OCI-LY7 (cell line): ENCODE measurements at regions of chr5 and their contacts with region 1.

Region 1: GRCh38 chr5:180784497-180785097 is 18.0 kb downstream of the MGAT1 start:
- DNase-seq: peak; percentile 81
- H3K4me3 ChIP-seq: no peak overlapping the region
- H3K27ac ChIP-seq: no peak overlapping the region
- H3K4me1 ChIP-seq: no peaks in the 10 kb centered on the region
- CTCF ChIP-seq: peak; percentile 87

Region 2: GRCh38 chr5:180810210-180810958 is 25.8 kb after region 1 on chr5:
- CTCF ChIA-PET with region 1: no interaction called
- POLR2A ChIA-PET with region 1: no interaction called
- intact Hi-C with region 1: no loop called
- DNase-seq: peak; percentile 96
- H3K4me3 ChIP-seq: peak overlapping the region; percentile 84
- H3K27ac ChIP-seq: peak overlapping the region; percentile 96
- H3K4me1 ChIP-seq: peaks cover 79% of the 10 kb centered on the region
- CTCF ChIP-seq: no peak

Region 3: DNA sequence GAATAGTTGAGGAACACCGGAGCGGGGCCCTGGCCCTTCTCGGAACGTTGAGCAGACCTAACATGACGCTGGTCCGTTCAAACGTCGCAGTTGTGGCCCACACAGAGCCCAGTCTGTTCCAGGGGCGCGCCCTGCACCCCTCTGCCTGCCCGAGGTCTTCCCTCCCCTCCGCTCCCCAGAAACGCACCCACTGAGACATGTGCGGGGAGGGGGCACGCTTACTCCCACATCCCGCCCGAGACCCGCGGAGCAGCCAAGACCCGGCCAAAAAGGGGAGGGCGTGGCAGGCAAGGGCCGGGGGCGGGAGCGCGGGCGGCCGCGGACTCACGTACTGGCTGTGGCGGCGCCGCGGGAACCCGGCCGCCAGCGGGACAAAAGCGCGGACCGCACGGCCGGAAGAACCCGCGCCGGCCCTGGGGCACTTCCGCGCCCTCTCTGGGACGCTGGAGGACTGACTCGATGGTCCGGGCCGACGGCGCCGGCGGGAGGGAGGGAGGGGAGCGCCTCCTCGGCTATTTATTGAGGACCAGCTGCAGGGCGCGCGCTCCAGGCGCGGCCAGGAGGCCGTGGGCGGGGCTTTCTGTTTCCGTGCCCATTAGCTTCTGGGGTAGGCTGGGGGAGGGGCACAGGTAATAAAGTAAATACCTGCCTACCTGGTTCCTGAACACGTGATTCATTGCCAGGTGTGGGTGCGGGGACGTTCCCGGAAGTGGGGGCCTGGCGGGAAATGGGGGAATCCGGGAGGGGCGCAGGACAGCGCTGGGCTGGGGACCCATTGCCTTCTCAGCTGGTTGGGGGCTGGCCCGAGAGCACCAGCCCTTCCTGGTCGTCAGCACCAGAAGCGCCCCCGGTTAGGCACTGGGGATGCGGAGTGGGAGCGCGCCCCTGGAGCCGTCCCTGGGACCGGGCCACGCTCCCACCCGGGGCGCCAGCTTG is 76.6 kb after region 1 on chr5 and contains the start of gene ZFP62:
- CTCF ChIA-PET with region 1: interaction called, 3 read pairs
- POLR2A ChIA-PET with region 1: interaction called, 3 read pairs
- intact Hi-C with region 1: loop called (anchors 2 kb)
- DNase-seq: peak; percentile 96
- H3K4me3 ChIP-seq: peak within 1 kb of the TSS; percentile 96
- H3K27ac ChIP-seq: peak within 1 kb of the TSS; percentile 95
- H3K4me1 ChIP-seq: peaks cover 18% of the 10 kb centered on the region
- CTCF ChIP-seq: no peak
- total RNA-seq, gene ZFP62: 58.4 and 59.0 TPM in 2 replicates

Region 4: DNA sequence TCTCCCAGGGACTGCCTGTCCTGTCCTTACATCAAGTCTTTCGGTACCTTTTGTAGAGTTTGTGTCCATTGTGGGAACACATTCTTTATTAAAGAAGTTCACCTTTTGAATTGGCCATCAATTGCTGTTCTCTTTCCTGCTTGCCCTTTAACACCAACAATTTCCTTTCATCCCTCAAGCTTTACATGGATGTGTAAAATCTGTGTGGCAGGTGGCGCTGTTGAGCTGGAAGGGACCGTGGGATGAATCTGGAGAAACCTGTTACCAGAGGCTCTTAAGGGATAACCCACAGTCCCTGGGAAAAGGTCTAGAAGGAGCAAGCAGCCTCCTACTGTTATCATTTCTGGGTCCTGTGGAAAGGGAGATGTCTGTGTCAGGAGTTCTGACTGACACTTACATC is 84.4 kb after region 1 on chr5:
- CTCF ChIA-PET with region 1: interaction called, 3 read pairs
- POLR2A ChIA-PET with region 1: interaction called, 3 read pairs
- intact Hi-C with region 1: loop called (anchors 1 kb)
- DNase-seq: peak; percentile 78
- H3K4me3 ChIP-seq: no peak overlapping the region
- H3K27ac ChIP-seq: no peak overlapping the region
- H3K4me1 ChIP-seq: peaks cover 15% of the 10 kb centered on the region
- CTCF ChIP-seq: peak; percentile 97

Region 5: GRCh38 chr5:180920710-180921109 is 136.1 kb after region 1 on chr5:
- CTCF ChIA-PET with region 1: no interaction called
- POLR2A ChIA-PET with region 1: no interaction called
- intact Hi-C with region 1: loop called (anchors 10 kb)
- DNase-seq: no peak
- H3K4me3 ChIP-seq: no peak overlapping the region
- H3K27ac ChIP-seq: no peak overlapping the region
- H3K4me1 ChIP-seq: no peaks in the 10 kb centered on the region
- CTCF ChIP-seq: no peak

Region 6: GRCh38 chr5:181043285-181044092 is 258.9 kb after region 1 on chr5:
- CTCF ChIA-PET with region 1: no interaction called
- POLR2A ChIA-PET with region 1: interaction called, 3 read pairs
- intact Hi-C with region 1: loop called (anchors 5 kb)
- DNase-seq: peak; percentile 67
- H3K4me3 ChIP-seq: peak overlapping the region; percentile 64
- H3K27ac ChIP-seq: peak overlapping the region; percentile 84
- H3K4me1 ChIP-seq: peaks cover 53% of the 10 kb centered on the region
- CTCF ChIP-seq: peak; percentile 75

Region 7: GRCh38 chr5:181159286-181159829 is 374.8 kb after region 1 on chr5:
- CTCF ChIA-PET with region 1: no interaction called
- POLR2A ChIA-PET with region 1: no interaction called
- intact Hi-C with region 1: loop called (anchors 5 kb)
- DNase-seq: peak; percentile 84
- H3K4me3 ChIP-seq: no peak overlapping the region
- H3K27ac ChIP-seq: peak overlapping the region; percentile 80
- H3K4me1 ChIP-seq: peaks cover 38% of the 10 kb centered on the region
- CTCF ChIP-seq: peak; percentile 95